Dendritic cell treated with granulocyte-macrophage colony-stimulating factor and Interleukin-4, amounts not matched to agents 40 ng/mL and 50 ng/mL, for 4 days (primary cell): ENCODE measurements at regions of chr5 and their contacts with region 1.

Region 1: GRCh38 chr5:65624571-65625555 is at the starts of genes SHLD3 and TRAPPC13:
- H3K4me3 Mint-ChIP-seq: peak within 1 kb of the TSS; percentile 98
- H3K27ac Mint-ChIP-seq: peak within 1 kb of the TSS; percentile 97
- H3K4me1 Mint-ChIP-seq: peaks cover 16% of the 10 kb centered on the region
- H3K27me3 Mint-ChIP-seq: no peaks in the 10 kb centered on the region

Region 2: DNA sequence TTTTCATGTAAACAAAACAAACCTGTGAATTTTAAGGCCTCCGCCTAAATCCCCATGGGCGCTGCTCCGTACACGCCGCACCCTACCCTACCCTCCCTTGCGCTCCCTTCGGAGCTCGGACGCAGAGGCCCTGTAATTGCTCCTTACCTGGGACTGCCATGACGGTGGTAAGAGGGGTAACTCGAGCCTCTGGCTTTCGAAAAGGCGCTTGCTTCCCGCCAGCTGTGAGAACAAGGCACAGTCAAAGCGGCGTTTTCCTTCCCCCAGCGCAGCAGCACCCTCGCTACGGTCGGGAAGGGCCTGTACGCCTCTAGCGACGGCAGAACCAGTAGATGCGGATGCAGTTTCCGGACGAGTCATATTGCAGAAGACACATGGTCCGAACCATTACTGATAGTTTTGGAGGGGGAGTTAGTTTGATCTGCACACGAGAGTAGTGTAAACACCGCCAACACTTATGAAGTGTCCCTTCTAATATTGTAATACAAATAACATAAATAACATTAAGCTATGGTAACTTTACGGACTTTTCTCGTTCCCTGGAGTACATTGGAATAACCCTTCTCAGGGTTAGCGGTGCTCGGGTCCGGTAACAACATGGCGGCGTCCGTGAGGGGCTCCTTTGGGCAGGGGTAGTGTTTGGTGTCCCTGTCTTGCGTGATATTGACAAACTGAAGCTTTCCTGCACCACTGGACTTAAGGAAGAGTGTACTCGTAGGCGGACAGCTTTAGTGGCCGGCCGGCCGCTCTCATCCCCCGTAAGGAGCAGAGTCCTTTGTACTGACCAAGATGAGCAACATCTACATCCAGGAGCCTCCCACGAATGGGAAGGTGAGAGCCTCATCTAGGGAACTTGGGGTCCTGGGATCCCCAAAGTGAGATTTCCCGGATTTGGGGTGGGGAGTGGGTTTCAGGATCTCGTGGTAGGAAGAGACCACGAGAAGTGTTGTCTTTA is 856.2 kb before region 1 on chr5 and contains the starts of genes CWC27 and SREK1IP1:
- intact Hi-C with region 1: loop called (anchors 2 kb)
- H3K4me3 Mint-ChIP-seq: peak within 1 kb of the TSS; percentile 95
- H3K27ac Mint-ChIP-seq: peak within 1 kb of the TSS; percentile 96
- H3K4me1 Mint-ChIP-seq: peaks cover 49% of the 10 kb centered on the region
- H3K27me3 Mint-ChIP-seq: no peaks in the 10 kb centered on the region

Region 3: GRCh38 chr5:65413822-65414221 is 211.0 kb before region 1 on chr5:
- intact Hi-C with region 1: no loop called
- H3K4me3 Mint-ChIP-seq: no peak overlapping the region
- H3K27ac Mint-ChIP-seq: no peak overlapping the region
- H3K4me1 Mint-ChIP-seq: no peaks in the 10 kb centered on the region
- H3K27me3 Mint-ChIP-seq: no peaks in the 10 kb centered on the region

Region 4: DNA sequence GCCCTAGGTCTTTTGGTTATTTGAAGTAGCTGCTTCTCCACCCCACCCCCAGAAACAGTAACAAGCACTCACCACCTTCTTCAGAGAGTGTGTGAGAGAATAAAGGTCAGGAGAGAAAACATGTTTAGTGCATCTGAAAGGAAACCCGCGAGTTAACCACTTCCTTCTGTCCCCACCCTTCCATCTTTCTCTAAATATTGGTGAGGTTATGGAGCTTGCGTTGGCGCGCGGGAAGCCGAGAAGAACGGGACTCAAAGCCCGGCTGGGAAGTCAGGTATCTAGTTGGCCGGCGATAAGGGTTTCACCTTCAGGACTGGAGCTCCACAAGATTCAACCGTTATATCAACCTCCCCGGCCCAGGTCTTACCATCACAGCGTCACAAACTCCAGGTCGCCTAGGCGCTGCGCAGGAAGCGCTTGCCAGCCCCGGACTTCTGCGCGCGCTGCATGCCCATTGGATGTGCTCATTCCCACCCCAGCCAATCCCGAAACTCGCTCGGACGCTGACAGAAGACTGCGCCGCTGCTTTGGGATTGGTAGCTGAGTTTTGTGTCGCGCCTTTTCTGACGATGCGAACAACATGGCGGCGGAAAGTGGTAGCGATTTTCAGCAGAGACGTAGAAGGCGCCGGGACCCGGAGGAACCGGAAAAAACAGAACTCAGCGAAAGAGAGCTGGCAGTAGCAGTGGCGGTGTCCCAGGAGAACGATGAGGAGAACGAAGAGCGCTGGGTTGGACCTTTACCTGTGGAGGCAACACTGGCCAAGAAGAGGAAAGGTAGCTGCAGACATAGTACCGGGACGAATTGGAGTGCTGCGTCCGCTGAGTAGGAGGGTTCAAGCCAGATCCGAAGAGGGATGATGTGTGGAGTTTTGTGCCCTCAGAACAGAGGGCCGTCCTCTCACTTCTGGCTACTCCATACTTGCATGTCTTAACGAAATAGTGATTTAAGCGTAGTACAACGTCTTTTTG is 61.8 kb before region 1 on chr5 and contains the starts of genes CENPK and PPWD1:
- intact Hi-C with region 1: loop called (anchors 1 kb)
- H3K4me3 Mint-ChIP-seq: peak within 1 kb of the TSS; percentile 97
- H3K27ac Mint-ChIP-seq: peak within 1 kb of the TSS; percentile 95
- H3K4me1 Mint-ChIP-seq: peaks cover 22% of the 10 kb centered on the region
- H3K27me3 Mint-ChIP-seq: no peaks in the 10 kb centered on the region

Region 5: DNA sequence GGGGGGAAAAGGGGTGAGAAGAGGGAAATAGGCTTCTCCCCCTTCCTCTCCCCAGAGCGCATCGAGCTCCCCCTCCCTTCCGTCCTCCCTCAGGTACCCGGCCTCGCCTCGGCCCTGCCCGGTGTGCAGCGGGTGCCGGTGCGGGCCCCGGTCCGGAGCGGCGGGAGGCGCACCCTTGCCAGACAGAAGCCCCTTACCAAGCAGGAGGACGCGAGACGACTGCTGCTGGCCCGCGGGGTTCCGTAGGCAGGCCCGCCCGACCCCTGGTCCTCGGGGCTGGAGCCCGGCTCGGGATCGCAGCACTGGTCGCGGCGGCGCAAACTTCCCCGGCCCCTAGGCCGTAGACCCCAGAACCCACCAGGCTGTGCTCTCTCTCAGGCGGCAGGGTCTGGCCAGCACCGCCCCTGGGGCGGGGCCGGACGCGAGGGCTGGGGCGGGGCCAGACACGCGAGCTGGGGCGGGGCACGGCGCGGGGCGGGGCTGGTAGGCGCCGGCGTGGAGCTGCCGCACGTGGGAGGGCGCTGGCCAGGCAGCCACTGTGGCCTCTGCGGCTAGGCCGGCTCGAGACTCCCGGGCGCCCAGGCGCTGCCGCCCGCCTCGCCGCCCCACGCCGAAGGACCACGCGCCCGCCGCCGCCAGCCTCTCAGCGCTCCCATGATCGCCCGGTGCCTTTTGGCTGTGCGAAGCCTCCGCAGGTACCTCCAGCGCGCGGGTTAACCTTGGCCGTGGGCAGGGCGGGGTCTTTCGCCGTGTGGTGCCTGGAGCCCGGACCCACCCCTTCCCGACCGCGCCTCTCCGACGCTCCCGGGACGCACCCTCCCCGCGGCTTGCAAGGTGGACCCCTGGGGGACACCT is 97.1 kb after region 1 on chr5 and contains the starts of genes NLN and SGTB:
- intact Hi-C with region 1: loop called (anchors 1 kb)
- H3K4me3 Mint-ChIP-seq: peak within 1 kb of the TSS; percentile 94
- H3K27ac Mint-ChIP-seq: peak within 1 kb of the TSS; percentile 97
- H3K4me1 Mint-ChIP-seq: peaks cover 19% of the 10 kb centered on the region
- H3K27me3 Mint-ChIP-seq: no peaks in the 10 kb centered on the region

Region 6: DNA sequence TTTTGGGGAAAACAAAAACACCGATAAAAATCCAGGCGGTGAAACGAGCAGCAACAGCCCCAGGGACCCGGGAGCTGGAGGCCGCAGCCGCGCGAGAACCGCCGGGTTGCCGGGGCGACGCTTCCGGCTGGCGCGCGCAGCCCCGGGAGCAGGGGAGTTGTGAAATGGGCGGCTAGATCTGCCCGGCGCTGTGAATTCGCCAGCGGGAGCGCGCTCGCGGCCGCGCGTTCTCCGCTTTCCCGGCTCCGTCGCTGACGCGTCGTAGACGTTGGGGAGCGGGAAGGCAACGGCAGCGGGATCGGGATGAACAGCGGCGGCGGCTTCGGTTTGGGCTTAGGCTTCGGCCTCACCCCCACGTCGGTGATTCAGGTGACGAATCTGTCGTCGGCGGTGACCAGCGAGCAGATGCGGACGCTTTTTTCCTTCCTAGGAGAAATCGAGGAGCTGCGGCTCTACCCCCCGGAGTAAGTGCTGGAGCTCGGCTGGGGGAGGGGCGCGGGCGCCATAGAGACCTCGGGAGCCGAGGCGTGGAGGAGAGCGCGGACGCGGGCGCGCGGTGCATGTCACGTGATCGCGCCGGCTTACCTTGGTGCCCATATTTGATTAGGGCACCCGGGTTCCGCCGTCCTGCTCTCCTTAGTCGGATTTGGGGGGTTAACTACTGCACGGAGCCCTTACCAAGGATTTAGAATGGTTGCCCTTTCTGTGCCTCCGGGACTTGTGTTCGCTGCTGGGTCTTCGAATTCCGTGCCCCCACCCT is 519.4 kb after region 1 on chr5 and contains the start of gene SREK1:
- intact Hi-C with region 1: loop called (anchors 10 kb)
- H3K4me3 Mint-ChIP-seq: peak within 1 kb of the TSS; percentile 89
- H3K27ac Mint-ChIP-seq: peak within 1 kb of the TSS; percentile 99
- H3K4me1 Mint-ChIP-seq: peaks cover 9% of the 10 kb centered on the region
- H3K27me3 Mint-ChIP-seq: no peaks in the 10 kb centered on the region